ENCODE measurements at regions of chr16 and their contacts with region 1.

Region 1: GRCh38 chr16:58336332-58337089 is 41.7 kb upstream of the PRSS54 start:
- DNase-seq: peak; percentile 60 to 85
- H3K4me3 ChIP-seq: peak overlapping the region; percentile 5 to 51 (median 33)
- H3K27ac ChIP-seq: no peak overlapping the region
- H3K4me1 ChIP-seq: no peaks in the 10 kb centered on the region
- H3K27me3 ChIP-seq: no peaks in the 10 kb centered on the region
- CTCF ChIP-seq: peak; percentile 86 to 95 (median 88)
- POLR2A ChIP-seq: no peak

Region 2: GRCh38 chr16:58442547-58442946 is 106.0 kb after region 1 on chr16:
- intact Hi-C with region 1: no loop called
- DNase-seq: no peak
- H3K4me3 ChIP-seq: no peak overlapping the region
- H3K27ac ChIP-seq: no peak overlapping the region
- H3K4me1 ChIP-seq: no peaks in the 10 kb centered on the region
- H3K27me3 ChIP-seq: no peaks in the 10 kb centered on the region
- CTCF ChIP-seq: no peak
- POLR2A ChIP-seq: no peak

Region 3: DNA sequence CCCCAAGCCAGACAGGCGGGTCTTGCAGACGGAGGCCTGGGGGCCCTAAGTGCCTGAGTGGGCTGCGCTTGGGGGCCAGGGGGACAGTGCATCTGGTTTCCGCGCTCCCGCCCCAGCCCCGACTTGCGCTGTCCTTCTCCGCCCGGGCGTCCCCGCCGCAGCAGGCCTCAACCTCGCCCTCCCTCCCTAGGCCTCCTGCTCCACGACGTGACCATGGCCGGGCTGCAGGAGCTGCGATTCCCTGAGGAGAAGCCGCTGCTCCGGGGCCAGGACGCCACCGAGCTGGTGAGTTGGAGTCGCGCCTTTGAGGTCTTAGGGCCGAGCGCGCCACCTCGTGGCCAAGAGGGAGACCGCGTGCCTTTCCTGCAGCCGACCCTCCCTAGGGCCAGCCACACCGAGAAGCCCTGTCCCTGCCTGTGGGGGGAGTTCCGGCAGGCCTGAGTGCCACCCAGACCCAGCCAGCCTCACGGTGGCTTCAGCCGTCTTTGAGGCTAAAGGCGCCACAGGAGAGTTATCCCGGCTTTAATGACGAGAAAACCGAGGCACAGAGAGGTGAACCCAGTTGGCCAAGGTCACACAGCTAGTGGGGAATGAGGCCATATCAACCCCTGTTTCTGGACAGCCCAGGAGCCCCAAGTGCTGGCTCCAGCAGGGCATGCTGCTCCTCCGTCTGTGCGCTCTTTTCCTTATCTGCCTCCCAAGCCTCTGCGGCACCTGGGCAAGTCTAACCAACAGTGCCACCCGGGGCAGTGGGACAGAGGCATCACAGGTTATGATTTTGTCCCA is 151.2 kb after region 1 on chr16:
- intact Hi-C with region 1: loop called (anchors 10 kb)
- DNase-seq: peak; percentile 51 to 81
- H3K4me3 ChIP-seq: peak overlapping the region in 2 of 3 donors; percentile 31 to 57
- H3K27ac ChIP-seq: no peak overlapping the region
- H3K4me1 ChIP-seq: no peaks in the 10 kb centered on the region
- H3K27me3 ChIP-seq: peaks cover 0 to 5% of the 10 kb centered on the region in 2 donors
- CTCF ChIP-seq: peak; percentile 68 to 89 (median 89)
- POLR2A ChIP-seq: no peak

Region 4: GRCh38 chr16:58578642-58579041 is 242.1 kb after region 1 on chr16:
- intact Hi-C with region 1: no loop called
- DNase-seq: no peak
- H3K4me3 ChIP-seq: no peak overlapping the region
- H3K27ac ChIP-seq: no peak overlapping the region
- H3K4me1 ChIP-seq: no peaks in the 10 kb centered on the region
- H3K27me3 ChIP-seq: no peaks in the 10 kb centered on the region
- CTCF ChIP-seq: no peak
- POLR2A ChIP-seq: no peak